ENCODE measurements at regions of chr13 and their contacts with region 1.

Region 1: DNA sequence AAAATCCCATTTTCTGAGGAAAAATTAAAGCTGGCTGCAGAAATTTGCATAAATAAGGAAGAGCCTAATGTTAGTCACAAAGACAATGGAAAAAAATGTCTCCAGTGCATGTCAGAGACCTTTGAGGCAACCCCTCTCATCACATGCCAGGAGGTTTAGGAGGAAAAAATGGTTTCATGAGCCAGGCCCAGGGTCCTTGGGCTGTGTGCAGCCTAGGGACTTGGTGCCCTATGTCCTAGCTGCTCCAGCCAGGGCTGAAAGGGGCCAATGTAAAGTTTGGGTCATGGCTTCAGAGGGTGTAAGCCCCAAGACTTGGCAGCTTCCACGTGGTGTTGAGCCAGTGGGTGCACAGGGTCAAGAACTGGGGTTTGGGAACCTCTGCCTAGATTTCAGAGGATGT is 1252.6 kb downstream of the PCDH9 start:
- DNase-seq: no peak

Region 2: DNA sequence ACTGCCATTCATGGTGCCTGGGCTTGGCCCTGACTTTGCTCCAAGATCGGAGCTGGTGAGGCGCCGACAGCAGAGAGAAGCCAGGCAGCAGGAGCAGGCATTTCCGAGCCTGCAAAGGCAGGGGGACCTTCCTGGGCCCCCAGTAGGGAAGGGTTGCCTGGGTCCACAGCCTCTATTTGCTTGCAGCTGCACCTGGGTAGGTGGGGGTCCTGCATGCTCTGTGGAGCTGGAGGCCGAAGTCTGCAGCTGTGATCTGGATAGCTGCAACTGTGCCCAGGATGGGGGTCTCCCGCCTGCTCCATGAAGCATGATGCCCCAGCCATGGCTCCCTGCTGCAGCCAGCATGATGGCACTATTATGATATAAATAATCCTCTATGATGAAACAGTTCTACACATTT is 891.5 kb before region 1 on chr13:
- intact Hi-C with region 1: loop called in 1 of 2 experiments (anchors 5 kb)
- DNase-seq: no peak

Measured in posterior vena cava (tissue), 2 donors.